Stomach (tissue), 19 donors: ENCODE measurements at regions of chr2 and their contacts with region 1.

Region 1: GRCh38 chr2:158903711-158904443 is 64.6 kb upstream of the TANC1 start:
- DNase-seq: peak in 1 of 2 donors; percentile 22
- H3K4me3 ChIP-seq: no peak overlapping the region
- H3K27ac ChIP-seq: no peak overlapping the region
- H3K4me1 ChIP-seq: peaks cover 0 to 22% (median 2%) of the 10 kb centered on the region in 4 donors
- H3K27me3 ChIP-seq: no peaks in the 10 kb centered on the region
- CTCF ChIP-seq: no peak
- EP300 ChIP-seq: no peak
- POLR2A ChIP-seq: no peak

Region 2: DNA sequence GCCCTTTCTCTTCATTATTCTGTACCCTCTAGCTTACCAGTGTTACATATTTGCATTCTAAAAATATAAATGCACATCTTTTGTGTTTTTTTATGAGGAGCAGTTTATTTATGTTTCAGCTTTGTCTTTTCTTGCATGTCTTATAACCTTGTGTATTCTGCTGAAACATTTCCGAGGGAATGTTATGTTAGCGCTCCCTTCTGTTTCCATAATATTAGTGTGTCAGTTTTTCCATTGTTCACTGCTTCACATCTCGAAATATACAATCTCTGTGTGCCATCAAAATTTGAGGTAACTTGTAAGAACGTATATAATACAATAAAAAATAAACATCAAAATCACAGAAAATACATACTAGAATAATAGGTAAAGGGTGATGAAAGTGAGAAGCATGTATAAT is 293.8 kb before region 1 on chr2:
- intact Hi-C with region 1: no loop called
- DNase-seq: no peak
- H3K4me3 ChIP-seq: no peak overlapping the region
- H3K27ac ChIP-seq: no peak overlapping the region
- H3K4me1 ChIP-seq: no peaks in the 10 kb centered on the region
- H3K27me3 ChIP-seq: no peaks in the 10 kb centered on the region
- CTCF ChIP-seq: no peak
- EP300 ChIP-seq: no peak
- POLR2A ChIP-seq: no peak

Region 3: DNA sequence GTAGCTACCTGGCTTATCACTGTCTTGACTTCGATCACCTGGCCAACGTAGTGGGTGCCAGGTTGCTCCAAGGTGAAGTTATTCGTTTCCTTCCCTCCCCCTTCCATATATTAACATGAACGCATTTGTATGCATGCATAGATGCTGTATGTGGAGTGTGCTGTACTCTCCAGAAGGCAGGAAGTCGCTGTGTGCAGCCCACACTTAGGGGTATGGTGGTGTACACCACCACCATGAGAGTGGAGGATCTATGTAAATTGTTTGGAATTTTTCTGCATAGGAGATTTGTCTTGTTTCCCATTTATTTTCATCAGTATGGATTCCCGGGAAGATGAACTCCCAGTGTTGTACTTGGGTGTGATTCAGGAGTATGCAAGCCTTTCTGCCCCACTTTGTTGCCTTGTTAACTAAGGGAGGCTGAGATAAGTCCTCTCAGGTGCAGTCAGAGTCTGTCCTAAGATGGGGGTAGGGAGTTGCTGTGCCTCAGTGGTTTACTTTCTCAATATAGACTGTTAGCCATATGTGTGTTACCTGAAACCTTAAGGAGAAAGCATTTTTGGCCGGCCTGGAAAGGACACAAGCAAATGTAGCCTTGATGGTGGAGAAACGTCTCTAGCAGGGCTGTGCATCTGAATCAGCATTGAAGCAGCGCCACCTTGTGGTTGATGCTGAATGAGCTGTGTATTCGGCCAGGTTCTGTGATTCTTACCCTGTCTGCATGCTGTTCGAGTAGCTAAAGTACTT is 214.4 kb after region 1 on chr2:
- intact Hi-C with region 1: loop called (anchors 5 kb)
- DNase-seq: peak; percentile 89 to 96
- H3K4me3 ChIP-seq: no peak overlapping the region
- H3K27ac ChIP-seq: no peak overlapping the region
- H3K4me1 ChIP-seq: peaks cover 0 to 15% (median 7%) of the 10 kb centered on the region in 4 donors
- H3K27me3 ChIP-seq: no peaks in the 10 kb centered on the region
- CTCF ChIP-seq: peak in 5 of 7 experiments; percentile 78 to 88 (median 82)
- EP300 ChIP-seq: no peak
- POLR2A ChIP-seq: no peak

Region 4: DNA sequence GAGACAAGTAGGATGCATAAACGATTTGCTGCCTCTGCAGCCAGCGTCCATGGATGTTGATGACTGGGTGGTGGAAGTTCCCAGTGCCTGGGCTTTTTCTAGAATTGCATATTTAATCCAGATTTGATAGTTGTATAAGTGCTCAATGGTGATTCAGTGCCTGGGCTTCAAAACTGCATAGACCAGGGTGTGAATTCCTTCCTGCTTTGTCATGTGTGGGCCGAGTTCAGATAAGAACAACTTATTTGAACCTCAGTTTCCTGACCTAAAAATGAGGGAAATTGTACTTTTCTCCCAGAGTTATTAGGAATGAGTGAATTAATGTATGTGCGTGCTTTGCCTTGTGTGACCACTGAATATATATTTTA is 228.0 kb after region 1 on chr2:
- intact Hi-C with region 1: no loop called
- DNase-seq: no peak
- H3K4me3 ChIP-seq: no peak overlapping the region
- H3K27ac ChIP-seq: peak overlapping the region in 3 of 5 donors; percentile 26 to 62 (median 53)
- H3K4me1 ChIP-seq: peaks cover 21 to 67% (median 36%) of the 10 kb centered on the region in 4 donors
- H3K27me3 ChIP-seq: no peaks in the 10 kb centered on the region
- CTCF ChIP-seq: no peak
- EP300 ChIP-seq: no peak
- POLR2A ChIP-seq: no peak